ENCODE measurements at regions of chr9 and their contacts with region 1.

Region 1: GRCh38 chr9:35790385-35791296 is 750 bp upstream of the NPR2 start:
- DNase-seq: peak in 4 of 6 donors; percentile 47 to 65 (median 48)
- ATAC-seq: peak; percentile 92 to 97 (median 94)
- H3K4me3 ChIP-seq: no peak overlapping the region
- H3K27ac ChIP-seq: no peak overlapping the region
- H3K4me1 ChIP-seq: no peaks in the 10 kb centered on the region
- H3K27me3 ChIP-seq: no peaks in the 10 kb centered on the region
- CTCF ChIP-seq: peak; percentile 50 to 74 (median 62)

Region 2: DNA sequence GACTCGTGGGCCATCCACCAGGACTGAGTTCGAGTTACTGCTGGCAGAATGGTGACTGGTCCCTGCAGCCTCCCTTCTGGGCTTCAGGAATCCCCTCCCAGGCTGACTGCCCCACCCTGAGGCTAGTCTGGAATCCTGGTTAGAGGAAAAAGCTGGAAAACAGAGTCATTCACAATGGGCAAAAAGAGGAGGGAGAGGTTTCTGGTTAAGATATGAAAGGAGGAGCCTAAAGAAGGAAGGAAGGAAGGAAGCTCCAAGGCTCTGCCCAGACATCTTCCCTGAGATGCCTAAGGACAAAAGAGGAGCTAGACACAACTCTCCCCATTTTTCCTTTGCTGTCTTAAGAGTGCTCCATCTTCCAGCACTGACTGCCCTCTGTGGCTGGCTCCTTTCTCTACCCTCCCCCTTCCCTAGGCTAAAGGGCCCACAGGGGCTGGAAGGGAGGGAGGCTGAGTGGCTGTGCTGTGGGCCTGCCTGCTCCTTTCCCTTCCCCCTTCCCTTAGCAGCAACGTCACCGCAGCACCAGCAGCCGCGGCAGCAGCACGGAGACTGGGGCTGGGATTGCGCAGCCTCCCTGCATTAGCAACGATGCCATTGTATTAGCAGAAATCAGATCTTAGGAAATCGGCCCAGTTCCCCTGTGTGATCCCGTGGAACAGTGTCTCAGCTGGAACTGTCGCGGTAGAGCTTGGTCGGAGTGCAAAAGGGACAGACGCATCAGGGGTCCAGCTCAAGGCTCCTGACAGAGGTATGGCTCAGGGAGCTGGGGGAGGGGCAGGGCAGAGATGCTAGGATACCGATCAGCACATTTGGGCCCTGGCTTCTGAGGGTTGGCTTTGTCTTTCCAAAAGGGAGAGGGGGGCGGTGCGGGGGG is 252.0 kb before region 1 on chr9:
- intact Hi-C with region 1: no loop called
- DNase-seq: peak in 1 of 6 donors; percentile 57
- ATAC-seq: peak in 3 of 4 donors; percentile 81 to 90 (median 83)
- H3K4me3 ChIP-seq: peak overlapping the region in 1 of 4 donors; percentile 12
- H3K27ac ChIP-seq: peak overlapping the region in 2 of 4 donors; percentile 42 to 44
- H3K4me1 ChIP-seq: peaks cover 0 to 6% (median 0%) of the 10 kb centered on the region in 3 donors
- H3K27me3 ChIP-seq: no peaks in the 10 kb centered on the region
- CTCF ChIP-seq: no peak

Region 3: GRCh38 chr9:35871497-35871896 is 80.9 kb after region 1 on chr9:
- intact Hi-C with region 1: loop called in 2 of 3 experiments (anchors 5 to 10 kb)
- DNase-seq: peak in 2 of 6 donors; percentile 41 to 74
- ATAC-seq: peak in 3 of 4 donors; percentile 30 to 39 (median 31)
- H3K4me3 ChIP-seq: no peak overlapping the region
- H3K27ac ChIP-seq: no peak overlapping the region
- H3K4me1 ChIP-seq: no peaks in the 10 kb centered on the region
- H3K27me3 ChIP-seq: no peaks in the 10 kb centered on the region
- CTCF ChIP-seq: no peak

Region 4: GRCh38 chr9:35882263-35882848 is 91.7 kb after region 1 on chr9:
- intact Hi-C with region 1: loop called in 2 of 3 experiments (anchors 5 to 10 kb)
- DNase-seq: peak; percentile 66 to 95 (median 85)
- ATAC-seq: peak; percentile 67 to 98 (median 95)
- H3K4me3 ChIP-seq: no peak overlapping the region
- H3K27ac ChIP-seq: no peak overlapping the region
- H3K4me1 ChIP-seq: no peaks in the 10 kb centered on the region
- H3K27me3 ChIP-seq: peaks cover 0 to 7% (median 0%) of the 10 kb centered on the region in 4 donors
- CTCF ChIP-seq: peak; percentile 88 to 93 (median 90)

Region 5: DNA sequence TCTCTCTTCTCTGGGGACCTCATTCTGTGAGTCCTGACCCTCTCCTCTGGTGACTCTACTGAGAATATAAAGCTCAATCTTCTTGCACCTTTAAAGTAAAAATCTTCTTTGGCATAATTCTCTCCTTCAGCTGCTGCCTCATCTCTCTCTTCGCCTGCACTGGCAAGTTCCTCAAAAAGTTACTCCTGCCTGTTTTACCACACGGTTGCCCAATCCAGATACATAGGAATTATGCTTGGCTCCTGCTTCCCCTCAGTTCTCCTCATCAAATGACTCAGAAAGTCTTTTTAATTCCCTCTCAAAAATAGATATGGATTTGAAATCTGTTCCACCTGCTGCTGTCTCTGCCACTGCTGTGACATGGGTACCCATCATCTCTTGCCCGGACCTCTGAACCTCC is 101.0 kb after region 1 on chr9:
- intact Hi-C with region 1: loop called in 1 of 3 experiments (anchors 5 kb)
- DNase-seq: no peak
- ATAC-seq: no peak
- H3K4me3 ChIP-seq: no peak overlapping the region
- H3K27ac ChIP-seq: no peak overlapping the region
- H3K4me1 ChIP-seq: no peaks in the 10 kb centered on the region
- H3K27me3 ChIP-seq: no peaks in the 10 kb centered on the region
- CTCF ChIP-seq: no peak

Measured in pancreas (tissue), 10 donors.